ENCODE measurements at regions of chrX and their contacts with region 1.

Region 1: DNA sequence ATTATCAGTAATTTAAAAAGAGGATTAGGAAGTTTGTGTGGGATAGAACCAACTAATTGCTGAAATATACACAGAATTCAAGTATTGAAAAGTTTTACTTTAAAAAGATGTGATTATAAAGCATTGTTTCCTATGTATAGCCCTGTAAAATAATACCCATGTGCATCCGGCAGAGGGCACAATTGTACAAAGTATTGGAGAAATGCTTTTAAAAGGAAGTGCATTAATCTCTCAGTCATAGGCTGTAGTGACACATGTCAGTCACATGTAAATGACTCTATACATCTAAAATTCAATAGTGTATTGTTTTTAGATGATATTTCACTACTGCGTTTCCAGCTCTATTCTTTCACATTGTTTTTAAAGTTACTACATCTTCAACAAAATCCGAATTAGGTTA is 9.7 kb upstream of the GEMIN8 start:
- DNase-seq: peak in 5 of 10 donors; percentile 14 to 49 (median 26)

Region 2: DNA sequence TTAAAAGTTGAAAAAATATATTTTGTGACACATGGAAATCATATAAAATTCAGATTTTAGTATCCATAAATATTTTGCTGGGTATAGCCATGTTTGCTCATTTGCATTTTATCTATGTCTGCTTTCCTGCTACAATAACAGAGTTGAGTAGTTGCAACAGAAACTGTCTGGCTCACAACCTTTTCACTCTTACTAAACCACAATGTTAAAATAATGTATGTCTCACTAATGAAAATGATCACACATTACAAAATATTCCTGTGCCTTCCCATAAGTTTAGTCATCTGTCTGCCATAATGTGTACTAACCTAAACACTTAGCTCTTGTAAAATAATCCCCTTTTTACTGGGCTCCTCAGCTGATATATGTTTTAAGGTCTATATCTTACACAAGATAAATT is 1422.1 kb before region 1 on chrX:
- intact Hi-C with region 1: no loop called
- DNase-seq: no peak

Region 3: GRCh38 chrX:15242899-15243555 is 1203.7 kb after region 1 on chrX:
- intact Hi-C with region 1: loop called (anchors 2 kb)
- DNase-seq: peak in 4 of 10 donors; percentile 15 to 26 (median 20)

Measured in posterior cingulate gyrus (tissue), 11 donors.